Ascending aorta (tissue), 2 donors: ENCODE measurements at regions of chr9 and their contacts with region 1.

Region 1: DNA sequence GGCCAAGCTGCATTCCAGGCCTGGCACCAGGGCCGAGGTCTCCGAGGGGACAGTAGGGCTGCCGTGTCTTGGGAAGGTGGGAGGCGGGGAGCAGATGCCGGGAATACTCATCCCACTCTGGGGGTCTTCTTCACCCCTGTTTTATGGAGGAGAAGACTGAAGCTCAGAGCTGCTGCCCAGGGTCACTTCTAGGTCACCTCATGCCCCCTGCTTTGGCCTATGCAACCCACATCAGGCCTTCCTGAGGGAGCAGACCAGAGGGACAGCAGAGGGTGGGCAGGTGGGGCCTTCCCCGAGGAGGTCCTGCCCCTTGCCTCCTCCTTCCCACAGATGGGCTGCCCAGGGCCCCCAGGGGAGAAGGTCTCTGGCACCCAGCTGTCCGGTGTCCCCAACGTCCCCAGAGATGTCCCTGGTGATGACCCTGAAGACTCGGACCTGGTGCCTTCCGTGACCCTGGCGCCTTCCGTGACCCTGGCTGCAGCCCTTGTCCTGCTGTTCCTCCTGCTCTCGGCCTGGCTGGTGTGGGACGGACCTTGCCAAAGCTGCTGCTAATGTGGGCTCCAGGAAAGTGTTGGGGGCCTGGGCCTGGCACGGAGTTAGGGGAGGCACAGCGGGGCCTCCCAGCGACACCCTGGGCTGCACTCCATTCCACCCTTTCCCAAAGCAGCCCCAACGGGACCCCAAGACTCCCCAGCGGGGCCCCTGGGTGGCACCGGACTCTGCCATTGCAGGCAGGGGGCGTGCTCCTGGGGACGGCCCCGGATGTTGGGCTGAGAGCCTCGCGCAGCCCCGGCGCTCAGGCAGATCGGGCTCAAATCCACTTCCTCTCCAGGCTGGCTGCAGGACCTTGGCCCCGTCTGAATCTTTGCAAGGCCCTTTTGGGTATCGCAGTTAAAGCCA is 6.7 kb upstream of the SLC2A6 start:
- DNase-seq: no peak
- H3K4me3 ChIP-seq: no peak overlapping the region
- H3K27ac ChIP-seq: no peak overlapping the region
- H3K4me1 ChIP-seq: peaks cover 0 to 2% of the 10 kb centered on the region in 2 donors
- H3K27me3 ChIP-seq: no peaks in the 10 kb centered on the region
- CTCF ChIP-seq: no peak

Region 2: GRCh38 chr9:133184962-133185361 is 300.6 kb before region 1 on chr9:
- intact Hi-C with region 1: loop called (anchors 5 kb)
- DNase-seq: no peak
- H3K4me3 ChIP-seq: no peak overlapping the region
- H3K27ac ChIP-seq: no peak overlapping the region
- H3K4me1 ChIP-seq: no peaks in the 10 kb centered on the region
- H3K27me3 ChIP-seq: no peaks in the 10 kb centered on the region
- CTCF ChIP-seq: peak in 2 of 3 experiments; percentile 37 to 49

Region 3: DNA sequence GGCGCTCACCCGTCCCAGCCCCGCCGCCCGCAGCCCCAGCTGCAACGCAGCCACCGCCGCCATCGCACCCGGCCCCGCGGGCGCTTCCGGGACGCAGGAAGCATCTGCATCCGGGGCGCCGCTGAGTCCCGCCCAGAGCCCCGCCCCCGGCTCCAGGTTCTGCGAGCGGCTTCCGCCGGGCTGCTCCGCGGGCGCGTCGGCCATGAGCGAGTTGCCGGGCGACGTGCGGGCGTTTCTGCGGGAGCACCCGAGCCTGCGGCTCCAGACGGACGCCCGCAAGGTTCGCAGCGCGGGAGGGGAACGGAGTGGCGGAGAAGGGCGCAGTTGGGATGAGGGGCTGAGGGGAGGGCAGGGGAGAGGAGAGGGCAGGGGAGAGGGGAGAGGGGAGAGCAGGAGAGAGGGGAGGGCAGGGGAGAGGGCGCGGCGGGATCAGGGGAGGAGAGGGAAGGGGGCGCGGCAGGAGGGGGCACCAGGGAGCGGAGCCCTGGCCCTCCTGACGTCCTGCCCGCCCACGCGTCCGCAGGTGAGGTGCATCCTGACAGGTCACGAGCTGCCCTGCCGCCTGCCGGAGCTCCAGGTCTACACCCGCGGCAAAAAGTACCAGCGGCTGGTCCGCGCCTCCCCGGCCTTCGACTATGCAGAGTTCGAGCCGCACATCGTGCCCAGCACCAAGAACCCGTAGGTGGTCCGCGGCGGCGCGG is 129.1 kb before region 1 on chr9 and contains the starts of genes SURF1 and SURF2:
- intact Hi-C with region 1: loop called (anchors 5 kb)
- DNase-seq: peak; percentile 52 to 92
- H3K4me3 ChIP-seq: peak within 1 kb of the TSS; percentile 70 to 87
- H3K27ac ChIP-seq: peak within 1 kb of the TSS; percentile 47 to 72
- H3K4me1 ChIP-seq: peaks cover 10 to 16% of the 10 kb centered on the region in 2 donors
- H3K27me3 ChIP-seq: no peaks in the 10 kb centered on the region
- CTCF ChIP-seq: no peak
- total RNA-seq, gene SURF1: 19.9 TPM
- total RNA-seq, gene SURF2: 4.4 TPM

Region 4: DNA sequence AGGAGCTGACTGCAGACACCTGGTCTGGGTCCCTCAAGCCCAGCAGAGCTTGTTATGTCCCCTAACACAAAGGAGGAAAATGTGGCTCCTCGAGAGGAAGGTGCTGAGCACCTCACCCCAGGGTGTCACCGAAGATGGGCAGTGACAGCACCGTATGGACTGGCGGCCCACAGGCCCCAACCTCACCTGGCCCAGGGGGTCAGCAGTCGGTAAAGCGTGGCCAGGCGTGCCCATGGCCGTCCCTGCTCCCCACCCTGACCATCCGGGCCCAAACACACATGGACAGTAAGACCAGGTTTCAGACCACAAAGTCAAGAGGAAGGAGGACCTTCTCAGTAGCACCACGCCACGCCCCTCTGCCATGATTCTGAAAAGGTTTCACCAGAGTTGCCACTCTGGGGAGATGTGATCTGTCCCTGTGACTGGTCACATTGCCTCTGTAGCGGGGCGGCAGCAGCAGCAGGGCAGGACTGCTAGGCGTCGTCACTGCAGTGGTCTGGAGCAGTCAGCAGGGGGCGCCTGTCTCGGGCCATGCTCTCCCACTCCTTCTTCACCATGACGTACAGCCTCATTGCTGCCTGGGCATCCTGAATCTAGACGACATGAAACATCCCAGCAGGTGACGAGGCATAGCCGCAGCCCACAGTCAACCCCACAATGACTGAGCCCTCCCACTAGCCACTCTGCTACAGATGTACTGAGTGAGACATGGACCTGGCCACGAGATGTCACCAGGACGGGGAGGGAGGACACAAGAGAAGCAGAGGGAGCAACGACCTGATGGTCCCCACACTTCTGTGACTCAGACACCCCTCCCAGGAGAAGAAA is 78.9 kb before region 1 on chr9:
- intact Hi-C with region 1: loop called (anchors 1 kb)
- DNase-seq: peak; percentile 16 to 79
- H3K4me3 ChIP-seq: no peak overlapping the region
- H3K27ac ChIP-seq: no peak overlapping the region
- H3K4me1 ChIP-seq: no peaks in the 10 kb centered on the region
- H3K27me3 ChIP-seq: no peaks in the 10 kb centered on the region
- CTCF ChIP-seq: peak; percentile 84 to 87 (median 87)

Region 5: DNA sequence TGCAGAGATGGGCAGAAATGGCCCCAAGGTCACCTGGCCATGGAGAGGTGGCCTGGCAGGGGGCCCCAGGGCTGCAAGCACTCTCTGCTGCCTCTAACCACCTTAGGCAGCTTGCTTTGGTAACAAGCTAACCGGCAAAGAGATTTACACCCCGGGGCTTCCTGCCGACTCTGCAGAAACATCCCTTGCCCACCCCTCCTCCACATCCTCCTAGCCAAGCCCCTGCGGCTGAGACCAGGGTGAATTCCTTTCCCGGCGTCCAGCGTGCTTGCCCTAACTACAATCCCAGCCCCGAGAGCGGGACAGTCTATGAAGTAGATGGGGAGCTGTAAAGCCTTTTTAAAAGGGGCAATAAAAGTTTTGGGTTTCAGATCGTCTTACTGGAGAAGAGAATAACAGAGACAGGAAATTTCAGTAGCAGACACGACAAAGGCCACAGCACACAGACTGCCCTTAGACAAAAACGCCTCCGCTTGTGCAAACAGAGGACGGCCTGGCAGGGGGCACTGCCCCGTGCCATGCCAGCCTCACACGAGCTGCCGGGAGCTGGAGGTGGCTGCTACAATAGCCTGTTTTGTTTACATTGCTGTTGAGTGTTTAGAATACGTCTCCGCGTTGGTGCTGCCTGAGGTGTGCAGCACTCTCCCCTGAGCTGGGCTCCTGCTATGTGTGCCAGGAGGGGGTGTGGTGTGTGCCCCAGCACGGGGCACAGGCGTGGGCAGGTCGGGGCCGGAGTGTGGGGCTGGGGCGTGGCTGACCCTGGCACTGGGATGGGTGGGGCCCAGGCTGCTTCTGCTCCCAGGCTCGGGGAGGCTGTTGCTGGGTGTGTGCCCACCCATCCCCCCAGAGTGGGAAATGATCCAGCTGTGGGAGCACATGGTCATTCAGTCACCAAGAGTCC is 23.8 kb after region 1 on chr9:
- intact Hi-C with region 1: no loop called
- DNase-seq: no peak
- H3K4me3 ChIP-seq: no peak overlapping the region
- H3K27ac ChIP-seq: no peak overlapping the region
- H3K4me1 ChIP-seq: peaks cover under 1 to 26% of the 10 kb centered on the region in 2 donors
- H3K27me3 ChIP-seq: no peaks in the 10 kb centered on the region
- CTCF ChIP-seq: no peak